ENCODE measurements at regions of chr18 and their contacts with region 1.

Region 1: DNA sequence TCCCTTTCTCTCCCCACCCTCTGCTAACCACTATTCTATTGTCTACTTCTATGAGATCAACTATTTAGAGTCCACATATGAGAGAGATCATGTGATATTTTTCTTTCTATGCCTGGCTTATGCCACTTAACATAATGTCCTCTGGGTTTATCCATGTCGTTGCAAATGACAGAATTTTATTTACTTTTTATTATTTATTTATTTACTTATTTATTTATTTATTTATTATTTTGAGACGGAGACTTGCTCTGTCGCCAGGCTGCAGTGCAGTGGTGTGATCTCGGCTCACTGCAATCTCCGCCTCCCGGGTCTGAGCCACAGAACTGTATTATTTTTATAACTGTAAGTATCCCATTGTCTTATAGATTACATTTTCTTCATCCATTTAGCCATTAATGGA is 443.4 kb upstream of the CDH19 start:
- DNase-seq: no peak
- ATAC-seq: no peak
- H3K4me3 ChIP-seq: no peak overlapping the region
- H3K4me3 Mint-ChIP-seq: no peak overlapping the region
- H3K27ac ChIP-seq: no peak overlapping the region
- H3K27ac Mint-ChIP-seq: no peak overlapping the region
- H3K4me1 ChIP-seq: no peaks in the 10 kb centered on the region
- H3K4me1 Mint-ChIP-seq: no peaks in the 10 kb centered on the region
- H3K27me3 ChIP-seq: no peaks in the 10 kb centered on the region
- H3K27me3 Mint-ChIP-seq: no peaks in the 10 kb centered on the region

Region 2: DNA sequence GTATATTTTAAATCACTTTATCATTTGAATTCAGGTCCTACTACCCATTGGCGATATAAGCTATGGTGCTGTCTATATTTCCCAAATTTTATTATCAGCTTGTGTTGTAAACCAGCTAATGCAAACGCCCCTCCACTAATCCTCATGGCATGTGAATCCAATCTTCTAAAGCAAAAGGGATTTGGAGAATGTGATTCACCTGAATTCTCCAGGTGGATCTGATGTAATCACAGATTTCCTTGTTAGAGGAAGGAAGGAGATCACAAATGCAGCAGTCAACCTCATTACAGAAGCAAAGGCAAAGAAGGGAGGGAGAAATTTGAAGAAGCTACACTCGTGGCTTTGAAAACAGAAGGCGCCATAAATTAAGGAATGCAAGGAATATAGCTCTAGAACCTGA is 12.3 kb before region 1 on chr18:
- CTCF ChIA-PET with region 1: no interaction called
- POLR2A ChIA-PET with region 1: no interaction called
- intact Hi-C with region 1: loop called in 1 of 2 experiments (anchors 1 kb)
- DNase-seq: no peak
- ATAC-seq: no peak
- H3K4me3 ChIP-seq: no peak overlapping the region
- H3K4me3 Mint-ChIP-seq: no peak overlapping the region
- H3K27ac ChIP-seq: no peak overlapping the region
- H3K27ac Mint-ChIP-seq: no peak overlapping the region
- H3K4me1 ChIP-seq: no peaks in the 10 kb centered on the region
- H3K4me1 Mint-ChIP-seq: no peaks in the 10 kb centered on the region
- H3K27me3 ChIP-seq: no peaks in the 10 kb centered on the region
- H3K27me3 Mint-ChIP-seq: no peaks in the 10 kb centered on the region

Region 3: DNA sequence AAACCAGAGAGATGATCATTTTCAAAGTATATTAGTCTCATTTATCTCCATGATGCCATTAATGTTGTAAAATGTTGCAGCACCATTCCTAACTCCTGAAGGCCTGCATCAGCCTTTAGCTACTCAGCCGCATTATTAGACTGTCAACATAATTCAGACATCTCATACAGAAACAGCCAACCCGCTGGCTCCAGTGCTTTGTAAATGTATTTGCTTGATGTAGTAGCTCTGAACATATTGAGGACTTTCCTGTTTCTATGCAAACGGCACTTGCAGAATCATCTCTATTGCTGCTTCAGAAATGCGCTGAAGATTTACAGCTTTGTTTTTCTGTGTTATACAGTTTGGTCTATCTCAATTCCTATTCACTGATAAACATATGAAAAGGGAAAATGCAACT is 97.0 kb after region 1 on chr18:
- CTCF ChIA-PET with region 1: no interaction called
- POLR2A ChIA-PET with region 1: no interaction called
- intact Hi-C with region 1: no loop called
- DNase-seq: no peak
- ATAC-seq: no peak
- H3K4me3 ChIP-seq: no peak overlapping the region
- H3K4me3 Mint-ChIP-seq: no peak overlapping the region
- H3K27ac ChIP-seq: no peak overlapping the region
- H3K27ac Mint-ChIP-seq: no peak overlapping the region
- H3K4me1 ChIP-seq: no peaks in the 10 kb centered on the region
- H3K4me1 Mint-ChIP-seq: no peaks in the 10 kb centered on the region
- H3K27me3 ChIP-seq: no peaks in the 10 kb centered on the region
- H3K27me3 Mint-ChIP-seq: no peaks in the 10 kb centered on the region

Measured in naive thymus-derived CD4-positive, alpha-beta T cell (primary cell).